ENCODE measurements at regions of chr1 and their contacts with region 1.

Region 1: GRCh38 chr1:109773146-109773899 is 9.6 kb upstream of the EPS8L3 start:
- DNase-seq: peak; percentile 40
- H3K4me3 ChIP-seq: no peak overlapping the region
- CTCF ChIP-seq: peak; percentile 96

Region 2: DNA sequence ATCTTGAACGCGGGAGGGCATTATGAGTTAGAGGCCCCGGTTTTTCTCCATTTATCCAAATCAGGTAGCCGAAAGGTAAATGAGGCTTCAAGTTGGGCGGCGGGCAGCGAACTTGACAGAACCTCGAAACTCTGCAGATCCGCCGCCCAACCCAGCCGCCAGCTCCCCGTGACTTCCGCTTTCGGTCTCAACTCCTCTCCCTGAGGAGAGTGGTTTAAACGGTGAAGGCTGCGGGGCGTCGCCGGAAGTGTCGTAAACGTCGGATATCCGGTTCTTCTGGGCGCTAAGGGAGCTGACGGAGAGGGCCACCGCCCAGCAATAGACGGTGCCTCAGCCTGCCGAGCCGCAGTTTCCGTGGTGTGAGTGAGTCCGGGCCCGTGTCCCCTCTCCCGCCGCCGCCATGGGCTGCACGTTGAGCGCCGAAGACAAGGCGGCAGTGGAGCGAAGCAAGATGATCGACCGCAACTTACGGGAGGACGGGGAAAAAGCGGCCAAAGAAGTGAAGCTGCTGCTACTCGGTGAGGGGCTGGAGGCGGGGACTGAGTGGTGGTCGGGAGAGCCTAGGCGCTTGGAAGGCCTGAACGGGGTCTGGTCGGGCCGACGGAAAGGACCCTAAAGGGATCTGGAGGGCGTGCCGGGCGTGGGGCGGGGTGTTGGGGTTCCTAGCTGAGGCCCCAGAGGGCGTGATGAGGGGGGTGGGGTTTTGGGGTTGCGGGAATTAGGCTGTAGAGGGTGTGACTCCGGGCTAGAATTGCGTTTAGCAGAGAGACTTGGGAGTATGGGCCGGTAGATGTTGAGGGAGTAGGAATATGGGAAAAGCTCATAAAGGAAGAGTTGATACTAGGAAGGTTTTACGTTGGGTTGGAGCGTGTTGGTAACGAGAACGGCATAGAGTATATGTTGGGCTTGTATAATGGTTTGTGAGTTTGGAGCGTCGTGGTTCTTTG is 224.7 kb before region 1 on chr1 and contains the start of gene GNAI3:
- CTCF ChIA-PET with region 1: interaction called, 377 read pairs
- POLR2A ChIA-PET with region 1: interaction called, 8 read pairs
- DNase-seq: peak; percentile 72
- H3K4me3 ChIP-seq: peak within 1 kb of the TSS; percentile 95
- CTCF ChIP-seq: no peak

Region 3: GRCh38 chr1:109783429-109783831 is 10.1 kb after region 1 on chr1:
- CTCF ChIA-PET with region 1: interaction called, 31 read pairs
- POLR2A ChIA-PET with region 1: no interaction called
- DNase-seq: no peak
- H3K4me3 ChIP-seq: no peak overlapping the region
- CTCF ChIP-seq: no peak

Region 4: GRCh38 chr1:109917768-109918606 is 144.7 kb after region 1 on chr1:
- CTCF ChIA-PET with region 1: interaction called, 14 read pairs
- POLR2A ChIA-PET with region 1: no interaction called
- DNase-seq: no peak
- H3K4me3 ChIP-seq: no peak overlapping the region
- CTCF ChIP-seq: no peak

Region 5: DNA sequence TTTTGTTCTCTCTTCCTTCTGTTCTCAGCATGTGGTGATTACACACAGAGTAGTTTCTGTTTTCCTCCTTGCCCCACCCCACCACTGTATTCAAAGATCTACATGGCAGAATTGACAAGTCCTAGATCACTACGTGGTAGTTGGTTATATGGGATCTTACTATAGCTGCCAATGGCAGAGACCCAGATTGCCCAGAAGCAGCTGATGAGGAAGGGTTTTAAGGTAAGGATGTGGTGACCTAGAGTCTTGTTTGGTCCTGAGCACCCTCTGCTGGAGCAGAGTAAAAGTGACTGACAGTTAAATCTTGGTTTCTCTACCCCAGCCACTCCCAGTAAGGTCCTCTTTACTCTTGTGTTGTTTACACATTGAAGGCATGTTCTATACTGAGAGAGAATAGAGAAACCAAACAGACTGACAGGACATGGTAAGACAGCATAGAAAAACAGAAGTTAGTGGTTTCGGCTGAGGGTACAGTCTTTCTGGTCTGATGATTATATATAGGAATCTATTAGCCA is 238.3 kb after region 1 on chr1:
- CTCF ChIA-PET with region 1: interaction called, 247 read pairs
- POLR2A ChIA-PET with region 1: no interaction called
- DNase-seq: no peak
- H3K4me3 ChIP-seq: no peak overlapping the region
- CTCF ChIP-seq: peak; percentile 61

Region 6: DNA sequence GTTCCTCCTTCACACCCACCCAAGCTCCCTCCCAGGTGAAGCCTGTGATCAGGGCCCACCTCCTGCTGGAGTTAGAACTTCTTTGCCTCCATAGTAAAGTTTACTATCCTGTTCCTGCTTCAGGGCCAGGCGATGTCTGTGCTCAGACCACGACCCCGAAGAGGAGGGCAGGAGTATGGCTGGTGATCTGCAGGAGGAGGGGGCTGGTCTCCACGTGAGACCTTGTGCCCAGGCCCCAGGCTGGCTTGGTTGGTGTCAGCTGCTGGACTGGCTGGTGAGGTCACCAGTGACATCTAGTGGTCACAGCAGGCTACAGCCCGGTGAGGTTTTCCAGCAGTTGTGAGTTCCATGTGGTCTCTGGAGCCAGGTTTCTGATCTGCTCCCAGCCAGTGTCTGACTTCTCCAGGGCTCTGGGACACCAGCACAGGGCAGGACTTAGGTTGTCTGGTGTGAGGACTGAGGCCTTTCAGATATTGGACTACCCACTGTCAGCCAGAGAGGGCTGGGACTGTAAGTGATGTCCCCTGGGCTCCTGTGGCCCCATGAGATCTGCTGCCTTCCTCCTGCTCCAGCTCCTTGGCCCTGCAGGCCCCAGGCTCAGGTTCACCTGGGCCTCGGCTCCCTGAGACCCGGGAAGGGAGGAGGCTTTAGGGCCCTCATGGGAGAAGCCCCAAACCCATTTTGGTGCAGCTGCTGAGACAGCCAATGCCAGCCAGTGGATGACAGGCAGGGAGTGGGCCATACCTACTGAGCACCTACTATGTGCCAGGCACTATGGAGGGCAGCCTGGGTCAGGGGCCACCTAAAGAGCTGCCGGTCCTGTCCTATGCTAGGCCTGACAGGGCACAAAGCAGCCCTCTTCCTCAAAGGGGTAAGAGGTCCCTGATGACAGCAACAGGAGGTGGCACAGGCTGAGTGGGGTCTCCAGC is 333.0 kb after region 1 on chr1:
- CTCF ChIA-PET with region 1: interaction called, 10 read pairs
- POLR2A ChIA-PET with region 1: no interaction called
- DNase-seq: no peak
- H3K4me3 ChIP-seq: no peak overlapping the region
- CTCF ChIP-seq: peak; percentile 92